Lower leg skin (tissue), 4 donors: ENCODE measurements at regions of chr1 and their contacts with region 1.

Region 1: DNA sequence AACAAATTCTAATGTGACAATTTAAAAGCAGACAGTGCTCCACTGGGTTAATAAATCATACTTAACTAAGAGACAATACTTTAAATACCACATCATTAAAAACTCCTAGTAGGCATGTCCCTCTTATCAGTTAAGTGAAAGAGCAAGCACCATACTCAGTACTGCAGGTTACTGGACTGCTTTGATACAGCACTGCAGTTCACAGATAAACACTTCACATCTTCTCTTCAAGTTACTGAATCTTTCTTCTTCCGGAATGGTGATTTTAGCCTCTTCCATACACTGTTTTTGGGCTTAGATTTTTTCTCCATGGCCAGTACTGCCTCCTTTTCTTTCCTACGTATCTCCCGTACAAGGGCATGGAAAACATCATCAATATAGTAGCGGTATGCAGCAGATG is 11.0 kb downstream of the RIT1 start:
- DNase-seq: no peak
- H3K4me3 ChIP-seq: no peak overlapping the region
- CTCF ChIP-seq: no peak
- POLR2A ChIP-seq: no peak

Region 2: DNA sequence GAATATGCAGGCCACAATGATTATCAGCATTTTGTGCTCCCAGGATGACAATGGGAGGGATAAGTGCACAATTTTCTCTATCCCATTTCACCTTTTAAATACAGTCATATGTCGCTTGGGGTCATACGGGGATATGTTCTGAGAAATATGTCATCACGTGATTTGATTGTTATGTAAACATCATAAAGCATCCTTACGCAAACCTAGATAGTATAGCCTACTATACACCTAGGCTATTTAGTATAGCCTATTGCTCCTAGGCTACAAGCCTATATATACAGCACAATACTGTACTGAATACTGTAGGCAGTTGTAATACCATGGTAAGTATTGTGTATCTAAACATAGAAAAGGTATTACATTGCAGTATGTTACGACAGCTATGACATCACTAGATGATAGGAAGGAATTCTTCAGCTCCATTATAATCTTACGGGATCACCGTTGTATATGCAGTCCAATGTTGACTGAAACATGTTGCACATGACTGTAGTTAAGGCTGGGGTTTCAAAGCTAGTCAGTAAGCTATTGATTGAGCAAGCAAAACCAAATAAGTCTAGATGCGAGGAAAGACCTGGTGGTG is 560.6 kb before region 1 on chr1:
- intact Hi-C with region 1: loop called (anchors 2 kb)
- DNase-seq: no peak
- H3K4me3 ChIP-seq: no peak overlapping the region
- CTCF ChIP-seq: no peak
- POLR2A ChIP-seq: no peak

Region 3: DNA sequence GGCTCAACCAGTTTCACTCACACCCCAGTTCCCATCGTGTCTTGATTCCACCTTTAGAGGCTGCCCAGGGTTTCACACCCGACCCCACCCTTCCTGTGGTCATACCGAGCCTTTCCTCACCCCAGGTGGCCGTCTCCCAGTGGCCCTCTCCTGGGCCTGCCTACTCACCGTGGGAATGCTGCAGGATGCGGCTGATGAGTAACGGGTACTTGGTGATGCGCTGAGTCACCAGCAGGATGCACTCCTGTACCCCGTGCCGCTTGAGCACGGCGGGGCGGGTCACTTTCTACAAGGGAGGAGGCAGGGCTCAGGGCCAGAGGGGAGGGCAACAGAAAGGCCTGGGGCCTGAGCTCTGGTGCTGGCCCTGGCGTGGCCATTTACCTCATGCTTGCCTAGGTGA is 61.8 kb after region 1 on chr1:
- intact Hi-C with region 1: no loop called
- DNase-seq: peak in 1 of 2 donors; percentile 92
- H3K4me3 ChIP-seq: no peak overlapping the region
- CTCF ChIP-seq: no peak
- POLR2A ChIP-seq: no peak